HEK293 (cell line): ENCODE measurements at regions of chr17 and their contacts with region 1.

Region 1: GRCh38 chr17:48483471-48484131 is 47.2 kb downstream of the HOXB1 start:
- H3K4me3 ChIP-seq: no peak overlapping the region
- H3K27ac ChIP-seq: peak overlapping the region; percentile 16; the same call in 1 of the 2 replicates
- H3K4me1 ChIP-seq: peaks cover 12% of the 10 kb centered on the region
- CTCF ChIP-seq: no peak

Region 2: DNA sequence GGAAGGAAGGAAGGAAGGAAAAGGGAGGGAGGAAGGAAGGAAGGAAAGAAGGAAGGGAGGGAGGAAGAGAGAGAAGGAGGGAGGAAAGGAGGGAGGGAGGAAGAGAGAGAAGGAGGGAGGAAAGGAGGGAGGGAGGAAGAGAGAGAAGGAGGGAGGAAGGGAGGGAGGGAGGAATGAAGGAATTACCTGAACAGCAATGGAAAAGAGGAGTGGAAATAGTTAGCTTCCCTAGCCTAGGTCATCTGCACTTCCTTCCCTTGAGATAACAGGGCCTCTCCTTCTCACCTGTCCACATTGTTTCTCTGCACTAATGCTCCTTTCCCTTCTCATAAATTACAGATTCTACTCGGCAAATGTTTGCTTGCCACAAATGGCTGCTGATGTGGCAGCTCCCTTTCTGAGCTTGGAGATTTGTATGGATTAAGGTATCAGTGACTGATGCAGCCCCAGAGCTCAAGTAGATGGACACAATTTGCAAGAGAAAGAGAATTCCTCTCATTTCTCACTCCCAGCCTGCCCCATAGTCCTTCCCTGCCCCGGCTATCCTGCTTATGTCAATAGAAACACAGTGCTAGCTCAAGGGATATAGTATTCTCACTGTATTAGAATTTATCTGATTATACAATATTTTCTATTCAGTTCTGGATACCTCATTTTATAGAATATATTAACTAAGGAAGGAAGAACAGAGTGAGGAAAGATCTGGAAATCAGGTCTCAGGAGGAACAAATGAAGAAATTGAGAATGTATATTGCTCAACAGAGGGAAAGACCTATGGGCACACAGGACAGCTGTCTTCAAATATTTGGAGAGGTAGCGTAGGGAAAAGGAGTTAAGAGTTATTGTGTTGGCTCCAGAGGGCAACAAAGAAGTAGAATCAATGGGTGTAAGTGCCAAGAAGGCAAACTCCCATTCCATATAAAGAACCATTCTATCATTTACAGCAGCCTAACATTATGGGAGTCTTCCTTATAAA is 32.6 kb after region 1 on chr17:
- CTCF ChIA-PET with region 1: interaction called, 10 read pairs
- POLR2A ChIA-PET with region 1: no interaction called
- H3K4me3 ChIP-seq: no peak overlapping the region
- H3K27ac ChIP-seq: no peak overlapping the region
- H3K4me1 ChIP-seq: peaks cover 22% of the 10 kb centered on the region
- CTCF ChIP-seq: no peak